Activated CD4-positive, alpha-beta T cell treated with anti-CD3 and anti-CD28 coated beads for 36 hours (primary cell): ENCODE measurements at regions of chr3 and their contacts with region 1.

Region 1: GRCh38 chr3:182005701-182006100 is 294.0 kb downstream of the SOX2 start:
- DNase-seq: no peak
- ATAC-seq: no peak
- H3K4me3 Mint-ChIP-seq: no peak overlapping the region
- H3K27ac Mint-ChIP-seq: no peak overlapping the region
- H3K4me1 Mint-ChIP-seq: no peaks in the 10 kb centered on the region
- H3K27me3 Mint-ChIP-seq: peaks cover 2% of the 10 kb centered on the region

Region 2: GRCh38 chr3:181629029-181629428 is 376.7 kb before region 1 on chr3:
- CTCF ChIA-PET with region 1: no interaction called
- POLR2A ChIA-PET with region 1: no interaction called
- intact Hi-C with region 1: no loop called
- DNase-seq: no peak
- ATAC-seq: no peak
- H3K4me3 Mint-ChIP-seq: no peak overlapping the region
- H3K27ac Mint-ChIP-seq: no peak overlapping the region
- H3K4me1 Mint-ChIP-seq: no peaks in the 10 kb centered on the region
- H3K27me3 Mint-ChIP-seq: peaks cover 2% of the 10 kb centered on the region

Region 3: DNA sequence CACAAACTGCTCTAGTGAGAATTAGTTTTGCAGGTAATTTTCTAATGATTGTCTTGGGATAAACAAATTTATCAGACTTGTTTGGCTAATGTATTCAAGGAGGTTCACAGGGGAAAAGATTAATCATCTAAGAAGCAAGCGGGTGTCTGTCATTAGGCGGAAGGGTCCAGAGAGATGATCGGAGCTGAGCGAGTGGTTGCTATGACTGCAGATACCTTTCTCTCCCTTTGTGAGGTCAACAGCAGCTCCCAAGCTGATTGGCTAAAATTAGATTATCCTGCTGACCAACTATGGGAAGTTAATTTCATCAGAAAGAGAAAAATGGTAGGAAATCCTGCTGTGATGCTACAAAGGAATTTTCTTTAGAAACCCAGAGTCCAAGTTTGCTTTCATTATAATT is 18.0 kb before region 1 on chr3:
- CTCF ChIA-PET with region 1: no interaction called
- POLR2A ChIA-PET with region 1: interaction called, 10 read pairs
- intact Hi-C with region 1: no loop called
- DNase-seq: no peak
- ATAC-seq: no peak
- H3K4me3 Mint-ChIP-seq: no peak overlapping the region
- H3K27ac Mint-ChIP-seq: no peak overlapping the region
- H3K4me1 Mint-ChIP-seq: no peaks in the 10 kb centered on the region
- H3K27me3 Mint-ChIP-seq: no peaks in the 10 kb centered on the region

Region 4: DNA sequence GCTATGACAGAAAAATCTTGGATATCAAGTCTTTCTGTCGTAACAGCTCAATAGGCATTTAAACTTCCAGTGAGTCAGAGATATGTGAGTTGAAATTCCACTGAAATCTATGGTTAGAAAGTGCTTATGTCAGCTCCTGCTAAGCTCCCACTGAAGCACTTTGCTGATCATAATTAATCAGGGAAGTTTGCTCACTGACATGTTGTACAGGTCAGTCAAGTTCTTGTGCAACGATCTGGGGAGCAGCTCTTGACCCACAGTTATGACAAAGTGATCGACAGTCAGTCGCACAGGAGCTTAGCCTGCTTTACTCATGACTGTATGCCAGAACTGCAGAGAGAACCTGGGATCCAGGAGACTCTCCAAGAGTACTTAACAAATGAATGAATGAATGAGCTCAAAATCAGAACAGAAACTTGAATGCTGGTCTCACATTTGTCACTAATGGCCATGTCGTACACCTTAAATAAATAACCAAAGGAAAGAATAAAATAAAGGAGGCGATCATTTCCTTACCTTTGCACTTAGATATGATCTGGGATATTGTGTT is 159.6 kb after region 1 on chr3:
- CTCF ChIA-PET with region 1: no interaction called
- POLR2A ChIA-PET with region 1: no interaction called
- intact Hi-C with region 1: no loop called
- DNase-seq: no peak
- ATAC-seq: no peak
- H3K4me3 Mint-ChIP-seq: no peak overlapping the region
- H3K27ac Mint-ChIP-seq: no peak overlapping the region
- H3K4me1 Mint-ChIP-seq: no peaks in the 10 kb centered on the region
- H3K27me3 Mint-ChIP-seq: no peaks in the 10 kb centered on the region